GM23248 (cell line): ENCODE measurements at regions of chr15 and their contacts with region 1.

Region 1: DNA sequence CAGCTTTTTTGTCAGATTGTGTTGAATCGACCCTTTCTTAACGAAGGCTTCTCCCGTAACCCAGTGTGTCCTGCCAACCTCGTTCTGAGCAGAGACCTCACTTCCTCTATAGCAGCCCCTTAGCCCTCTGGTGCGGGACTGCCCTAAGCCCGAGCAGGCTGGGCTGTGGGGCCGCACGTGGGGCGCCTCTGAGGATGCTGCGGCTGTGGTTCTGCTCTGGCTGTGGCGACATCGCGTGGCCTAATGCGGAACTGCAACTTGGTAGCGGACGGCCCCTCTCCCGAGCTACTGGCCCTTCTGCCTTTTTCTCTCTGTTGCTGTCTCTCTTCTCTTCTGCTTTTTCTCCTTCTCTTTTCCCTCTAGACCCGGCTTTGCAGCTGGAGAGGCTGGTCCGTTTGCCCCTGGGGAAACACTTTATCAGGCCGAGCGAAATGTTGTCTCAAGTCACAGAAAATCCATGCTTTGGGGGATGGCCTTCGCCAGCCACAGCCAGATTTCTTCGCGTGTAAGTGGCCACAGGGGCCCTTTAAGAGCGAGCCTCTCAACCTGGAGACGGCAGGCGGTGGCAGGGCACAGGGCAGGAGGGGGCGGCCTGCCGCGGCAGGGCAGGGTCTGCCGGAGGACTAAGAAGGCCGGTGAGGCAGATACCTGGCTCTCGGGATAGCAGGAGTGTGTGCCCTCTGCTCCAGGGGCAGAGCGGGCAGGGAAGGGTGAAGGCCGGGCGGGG is 19.4 kb upstream of the KIF23 start:
- DNase-seq: peak; percentile 82
- H3K4me3 ChIP-seq: no peak overlapping the region
- H3K27ac ChIP-seq: no peak overlapping the region
- H3K4me1 ChIP-seq: peaks cover 18% of the 10 kb centered on the region
- H3K27me3 ChIP-seq: no peaks in the 10 kb centered on the region

Region 2: GRCh38 chr15:69058830-69059556 is 335.7 kb before region 1 on chr15:
- in situ Hi-C with region 1: loop called (anchors 25 kb)
- DNase-seq: peak; percentile 86
- H3K4me3 ChIP-seq: no peak overlapping the region
- H3K27ac ChIP-seq: no peak overlapping the region
- H3K4me1 ChIP-seq: no peaks in the 10 kb centered on the region
- H3K27me3 ChIP-seq: no peaks in the 10 kb centered on the region